Endothelial cell of umbilical vein (primary cell): ENCODE measurements at regions of chr6 and their contacts with region 1.

Region 1: DNA sequence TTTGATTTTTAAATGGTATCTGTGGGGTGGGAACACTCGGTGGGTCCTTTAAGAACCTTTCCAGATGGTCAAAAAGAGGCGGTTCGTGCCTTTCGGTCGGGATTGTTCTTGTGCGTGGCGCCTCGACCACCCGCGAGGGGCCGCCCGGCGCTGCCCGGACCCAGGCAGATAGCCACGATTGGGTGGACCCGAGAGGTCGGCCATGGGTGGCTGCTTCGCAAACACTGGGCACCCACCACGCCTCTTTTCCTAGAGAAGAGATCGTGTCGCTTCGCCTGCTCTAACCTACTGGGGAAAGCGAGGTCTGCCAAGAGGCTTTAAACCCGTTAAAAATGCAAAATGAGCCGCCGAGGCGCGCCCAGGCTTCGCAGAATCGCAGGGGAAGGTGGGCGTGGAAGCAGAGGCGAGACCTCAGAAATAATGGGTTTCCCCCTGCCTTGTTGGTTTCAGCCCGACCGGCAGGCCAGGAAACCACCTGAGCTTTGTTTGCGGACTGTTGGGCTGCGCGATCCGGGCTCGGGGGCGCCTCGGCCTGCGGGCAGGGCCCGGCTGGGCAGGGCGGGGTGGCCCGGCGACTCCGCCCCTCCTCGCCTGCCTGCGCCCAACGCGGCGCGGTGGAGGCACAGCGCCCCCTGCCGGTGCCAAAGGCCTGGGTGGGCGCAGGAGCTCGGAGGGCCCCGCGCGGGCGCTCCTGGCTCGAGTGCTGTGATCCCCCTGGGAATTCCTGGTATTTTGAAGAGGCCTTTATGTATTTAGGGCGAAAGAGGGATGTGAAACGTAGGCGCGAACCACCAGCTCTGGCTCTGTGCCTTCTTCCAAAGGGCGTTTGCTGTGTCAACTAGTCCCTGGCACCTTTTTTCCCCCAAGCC is 1.6 kb downstream of the MARCKS start:
- DNase-seq: peak; percentile 92
- H3K4me3 ChIP-seq: peak overlapping the region; percentile 81 to 100 (median 100)
- H3K27ac ChIP-seq: peak overlapping the region; percentile 100
- H3K4me1 ChIP-seq: peaks cover 30% of the 10 kb centered on the region
- H3K27me3 ChIP-seq: no peaks in the 10 kb centered on the region
- CTCF ChIP-seq: peak; percentile 82 to 98
- POLR2A ChIP-seq: peak; percentile 85

Region 2: DNA sequence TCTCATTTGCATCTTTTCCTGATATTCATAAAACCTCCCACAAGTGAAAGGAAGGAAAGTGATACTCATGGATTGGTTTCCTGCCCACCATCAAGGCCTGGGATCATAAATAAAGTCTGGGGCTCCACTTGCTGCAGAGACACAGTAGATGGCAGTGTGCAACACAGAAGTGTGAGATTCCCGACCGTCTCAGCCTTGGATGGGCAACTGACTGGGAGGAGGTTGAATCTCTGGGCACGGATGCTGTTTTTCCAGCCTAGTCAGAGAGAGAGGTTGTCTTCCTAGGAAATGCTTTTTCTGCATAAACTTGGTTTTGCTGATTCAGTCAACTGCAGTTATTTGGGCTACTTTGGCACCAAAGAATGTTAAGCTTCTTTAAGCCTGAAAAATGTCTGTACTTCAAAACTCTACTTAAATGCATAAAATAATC is 1521.5 kb before region 1 on chr6:
- CTCF ChIA-PET with region 1: interaction called, 5 read pairs
- POLR2A ChIA-PET with region 1: no interaction called
- dilution Hi-C with region 1: no loop called
- intact Hi-C with region 1: loop called (anchors 1 kb)
- DNase-seq: peak; percentile 89
- H3K4me3 ChIP-seq: no peak overlapping the region
- H3K27ac ChIP-seq: no peak overlapping the region
- H3K4me1 ChIP-seq: peaks cover 8% of the 10 kb centered on the region
- H3K27me3 ChIP-seq: no peaks in the 10 kb centered on the region
- CTCF ChIP-seq: peak; percentile 75 to 85
- POLR2A ChIP-seq: peak; percentile 62

Region 3: GRCh38 chr6:112956696-112957528 is 901.8 kb before region 1 on chr6:
- CTCF ChIA-PET with region 1: no interaction called
- POLR2A ChIA-PET with region 1: no interaction called
- dilution Hi-C with region 1: no loop called
- intact Hi-C with region 1: no loop called
- DNase-seq: peak; percentile 90
- H3K4me3 ChIP-seq: no peak overlapping the region
- H3K27ac ChIP-seq: no peak overlapping the region
- H3K4me1 ChIP-seq: peaks cover 1% of the 10 kb centered on the region
- H3K27me3 ChIP-seq: no peaks in the 10 kb centered on the region
- CTCF ChIP-seq: no peak
- POLR2A ChIP-seq: no peak

Region 4: GRCh38 chr6:113050010-113050858 is 808.5 kb before region 1 on chr6:
- CTCF ChIA-PET with region 1: interaction called, 3 read pairs
- POLR2A ChIA-PET with region 1: no interaction called
- dilution Hi-C with region 1: no loop called
- intact Hi-C with region 1: loop called (anchors 1 kb)
- DNase-seq: peak; percentile 92
- H3K4me3 ChIP-seq: no peak overlapping the region
- H3K27ac ChIP-seq: peak overlapping the region; percentile 74
- H3K4me1 ChIP-seq: peaks cover 29% of the 10 kb centered on the region
- H3K27me3 ChIP-seq: no peaks in the 10 kb centered on the region
- CTCF ChIP-seq: no peak
- POLR2A ChIP-seq: no peak

Region 5: DNA sequence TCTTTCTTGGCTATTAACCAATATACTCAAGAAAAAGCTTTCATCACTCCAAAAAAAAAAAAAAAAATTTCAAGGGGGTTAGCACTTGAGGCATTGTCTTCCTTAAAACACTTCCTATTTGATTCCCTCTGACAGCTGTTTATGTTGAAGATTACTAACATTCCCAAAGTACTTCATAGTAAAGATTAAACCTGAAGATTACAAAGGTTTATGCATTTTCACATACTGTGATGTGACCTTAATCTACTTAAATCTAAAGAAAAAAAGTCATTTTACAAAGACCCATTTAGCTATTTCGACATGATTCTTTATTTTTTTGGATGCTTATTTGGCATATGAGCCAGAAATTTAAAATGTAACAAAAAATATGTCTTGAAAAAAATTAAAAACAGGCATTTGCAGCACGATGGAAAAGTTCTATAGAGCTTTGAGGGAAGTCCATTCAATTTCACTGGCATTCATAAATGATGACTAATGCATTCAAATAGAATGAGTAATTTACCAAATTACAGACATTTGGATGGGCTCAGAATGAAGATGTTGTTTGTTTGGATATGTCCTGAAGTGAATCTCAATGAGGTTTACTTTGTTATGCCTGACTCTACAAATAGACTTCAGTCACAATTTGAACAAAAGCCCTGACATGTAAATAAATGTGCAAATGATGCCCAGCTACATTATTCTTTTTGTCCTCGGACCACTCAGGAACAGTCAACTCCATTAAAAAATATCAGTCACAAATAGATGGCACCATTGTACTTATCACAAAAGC is 676.2 kb before region 1 on chr6:
- CTCF ChIA-PET with region 1: interaction called, 16 read pairs
- POLR2A ChIA-PET with region 1: interaction called, 3 read pairs
- dilution Hi-C with region 1: no loop called
- intact Hi-C with region 1: loop called (anchors 1 kb)
- DNase-seq: peak; percentile 82
- H3K4me3 ChIP-seq: peak overlapping the region in 1 of 3 experiments; percentile 38
- H3K27ac ChIP-seq: peak overlapping the region; percentile 87
- H3K4me1 ChIP-seq: peaks cover 29% of the 10 kb centered on the region
- H3K27me3 ChIP-seq: no peaks in the 10 kb centered on the region
- CTCF ChIP-seq: no peak
- POLR2A ChIP-seq: no peak

Region 6: GRCh38 chr6:113414511-113414910 is 444.2 kb before region 1 on chr6:
- CTCF ChIA-PET with region 1: interaction called, 35 read pairs
- POLR2A ChIA-PET with region 1: interaction called, 3 read pairs
- dilution Hi-C with region 1: no loop called
- intact Hi-C with region 1: loop called (anchors 1 kb)
- DNase-seq: peak; percentile 79
- H3K4me3 ChIP-seq: no peak overlapping the region
- H3K27ac ChIP-seq: no peak overlapping the region
- H3K4me1 ChIP-seq: peaks cover 9% of the 10 kb centered on the region
- H3K27me3 ChIP-seq: no peaks in the 10 kb centered on the region
- CTCF ChIP-seq: peak; percentile 55 to 57
- POLR2A ChIP-seq: no peak

Region 7: GRCh38 chr6:113558966-113559365 is 299.7 kb before region 1 on chr6:
- CTCF ChIA-PET with region 1: interaction called, 9 read pairs
- POLR2A ChIA-PET with region 1: no interaction called
- dilution Hi-C with region 1: no loop called
- intact Hi-C with region 1: loop called (anchors 2 kb)
- DNase-seq: peak; percentile 62
- H3K4me3 ChIP-seq: no peak overlapping the region
- H3K27ac ChIP-seq: peak overlapping the region; percentile 78
- H3K4me1 ChIP-seq: peaks cover 35% of the 10 kb centered on the region
- H3K27me3 ChIP-seq: no peaks in the 10 kb centered on the region
- CTCF ChIP-seq: no peak
- POLR2A ChIP-seq: no peak

Region 8: GRCh38 chr6:113909234-113909856 is 50.6 kb after region 1 on chr6:
- CTCF ChIA-PET with region 1: interaction called, 42 read pairs
- POLR2A ChIA-PET with region 1: no interaction called
- dilution Hi-C with region 1: no loop called
- intact Hi-C with region 1: loop called (anchors 1 kb)
- DNase-seq: peak; percentile 81
- H3K4me3 ChIP-seq: no peak overlapping the region
- H3K27ac ChIP-seq: no peak overlapping the region
- H3K4me1 ChIP-seq: peaks cover 2% of the 10 kb centered on the region
- H3K27me3 ChIP-seq: no peaks in the 10 kb centered on the region
- CTCF ChIP-seq: peak; percentile 30 to 37
- POLR2A ChIP-seq: no peak